Cardiac septum (tissue), 1 donor: ENCODE measurements at regions of chr6 and their contacts with region 1.

Region 1: GRCh38 chr6:53171605-53172446 is 23.2 kb upstream of the GCM1 start:
- DNase-seq: peak; percentile 96

Region 2: GRCh38 chr6:53294095-53294494 is 122.3 kb after region 1 on chr6:
- intact Hi-C with region 1: loop called (anchors 10 kb)
- DNase-seq: no peak

Region 3: GRCh38 chr6:53348371-53349208 is 176.8 kb after region 1 on chr6 and contains the start of gene ELOVL5:
- intact Hi-C with region 1: loop called (anchors 5 kb)
- DNase-seq: peak; percentile 99
- total RNA-seq, gene ELOVL5: 37.6 TPM

Region 4: DNA sequence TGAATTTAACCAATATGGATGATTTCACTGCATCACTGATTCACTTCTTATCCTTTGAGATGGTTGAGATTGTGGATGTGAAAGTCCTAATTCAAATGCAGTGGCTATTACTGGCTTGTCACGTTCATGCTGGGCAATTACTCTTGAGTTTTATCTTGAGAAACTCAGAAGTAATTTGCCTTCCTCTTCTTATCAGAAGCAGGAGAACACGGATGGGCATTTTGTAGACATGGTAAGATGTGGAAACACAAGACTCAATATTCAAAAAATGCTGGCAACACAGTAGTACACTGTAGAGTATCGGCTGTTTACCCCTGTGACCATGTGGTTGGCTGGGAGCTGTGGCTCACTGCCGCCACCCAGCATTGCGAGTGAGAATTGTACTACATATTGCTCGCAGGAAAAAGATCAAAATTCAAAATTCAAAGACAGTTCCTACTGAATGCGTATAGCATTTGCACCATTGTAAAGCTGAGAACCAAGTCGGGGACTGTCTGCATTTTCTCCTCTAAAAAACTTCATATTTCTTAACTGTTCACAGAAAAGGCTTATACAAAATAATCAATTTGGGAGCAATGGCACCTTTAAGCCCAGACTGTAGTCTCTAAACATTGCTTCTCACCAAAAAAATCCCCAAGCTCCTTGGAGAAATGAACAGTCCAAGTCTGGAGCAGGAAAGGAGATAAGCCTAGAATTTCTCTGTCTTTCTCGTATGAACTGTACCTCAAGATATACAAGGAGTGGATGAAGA is 238.9 kb after region 1 on chr6:
- intact Hi-C with region 1: loop called (anchors 2 kb)
- DNase-seq: no peak

Region 5: DNA sequence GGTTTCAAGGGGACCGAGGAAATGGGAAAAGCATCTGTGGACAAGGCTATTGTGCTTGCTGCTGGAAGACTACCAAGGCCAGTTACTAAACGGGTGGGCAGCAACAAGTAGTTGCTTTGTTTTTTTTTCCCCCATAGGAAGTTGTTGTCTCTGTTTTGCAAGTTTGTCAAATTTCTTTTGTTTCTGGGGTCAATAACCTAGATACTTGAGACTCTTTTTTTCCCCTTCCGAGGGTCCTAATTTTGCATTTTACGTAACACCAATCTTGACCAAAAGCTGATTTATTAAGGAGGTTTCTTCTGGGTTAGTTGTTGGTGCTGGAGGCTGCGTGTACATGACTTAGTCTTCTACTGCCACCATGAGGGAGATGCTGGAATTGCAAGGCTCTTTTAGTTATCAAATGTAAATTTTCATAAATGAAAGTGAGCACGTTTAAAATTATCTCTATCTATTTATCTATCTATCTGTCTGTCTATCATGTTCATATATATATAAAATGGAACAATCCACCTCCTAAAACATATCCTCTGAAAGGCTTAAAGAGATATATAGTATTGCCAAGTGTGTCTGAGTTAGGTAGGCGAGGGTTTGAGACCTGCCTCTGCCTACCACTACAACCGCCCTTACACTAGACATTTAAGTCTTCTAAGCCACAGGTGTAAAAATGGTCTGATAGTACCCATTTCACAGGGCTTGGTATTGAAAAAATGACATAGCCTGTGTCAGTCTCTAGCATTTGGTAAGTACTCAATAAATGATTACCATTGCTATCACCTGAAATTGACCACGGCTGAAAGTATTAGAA is 312.9 kb after region 1 on chr6:
- intact Hi-C with region 1: loop called (anchors 1 kb)
- DNase-seq: no peak